Activated CD4-positive, alpha-beta memory T cell treated with anti-CD3 and anti-CD28 coated beads, Interleukin-2, amount 10 ng/mL, durations not matched to agents 7 days and 5 days (primary cell): ENCODE measurements at regions of chr6 and their contacts with region 1.

Region 1: GRCh38 chr6:24910961-24911712 is 24.6 kb downstream of the RIPOR2 start:
- DNase-seq: peak; percentile 46
- H3K4me3 Mint-ChIP-seq: peak overlapping the region; percentile 76
- H3K27ac Mint-ChIP-seq: peak overlapping the region; percentile 79
- H3K4me1 Mint-ChIP-seq: peaks cover 90% of the 10 kb centered on the region
- H3K27me3 Mint-ChIP-seq: no peaks in the 10 kb centered on the region

Region 2: GRCh38 chr6:24827162-24827561 is 84.0 kb before region 1 on chr6:
- CTCF ChIA-PET with region 1: no interaction called
- POLR2A ChIA-PET with region 1: no interaction called
- DNase-seq: no peak
- H3K4me3 Mint-ChIP-seq: no peak overlapping the region
- H3K27ac Mint-ChIP-seq: peak overlapping the region; percentile 36
- H3K4me1 Mint-ChIP-seq: no peaks in the 10 kb centered on the region
- H3K27me3 Mint-ChIP-seq: no peaks in the 10 kb centered on the region

Region 3: DNA sequence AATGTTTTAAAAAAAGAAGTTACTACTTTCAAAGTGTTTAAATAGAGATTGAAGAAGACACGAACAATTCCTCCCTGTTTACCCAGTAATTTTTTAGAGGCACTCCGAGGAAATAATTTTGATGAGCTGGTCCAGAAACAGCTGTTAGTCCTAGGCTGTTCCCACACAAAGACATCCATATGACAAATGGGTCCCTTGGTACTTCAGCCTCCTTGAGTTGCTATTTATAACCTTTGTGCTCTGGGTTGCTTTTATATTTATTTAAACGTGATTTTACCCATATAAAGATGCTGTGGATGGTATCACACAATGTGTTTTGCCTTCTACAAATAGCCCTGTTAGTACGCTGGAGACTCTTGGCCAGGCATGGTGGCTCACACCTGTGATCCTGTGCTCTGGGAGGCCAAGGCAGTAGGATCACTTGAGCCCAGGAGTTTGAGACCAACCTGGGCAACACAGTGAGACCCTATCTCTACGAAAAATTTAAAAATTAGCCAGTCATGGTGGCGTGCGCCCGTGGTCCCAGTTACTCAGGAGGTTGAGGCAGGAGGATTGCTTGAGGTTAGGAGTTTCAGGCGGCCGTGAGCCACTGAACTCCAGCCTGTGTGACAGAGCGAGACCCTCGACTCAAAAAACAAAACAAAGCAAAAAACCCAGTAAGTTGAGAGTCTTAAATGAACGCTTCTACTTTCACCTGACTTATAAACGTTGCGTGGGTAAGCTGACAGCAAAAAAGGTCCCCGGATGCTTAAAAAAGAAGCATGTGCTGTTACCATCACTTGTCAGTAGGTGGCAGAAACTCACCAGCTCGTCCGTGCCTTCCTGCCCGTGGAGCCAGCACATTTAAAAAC is 55.5 kb before region 1 on chr6:
- CTCF ChIA-PET with region 1: interaction called, 32 read pairs
- POLR2A ChIA-PET with region 1: interaction called, 33 read pairs
- DNase-seq: peak; percentile 75
- H3K4me3 Mint-ChIP-seq: no peak overlapping the region
- H3K27ac Mint-ChIP-seq: peak overlapping the region; percentile 90
- H3K4me1 Mint-ChIP-seq: peaks cover 55% of the 10 kb centered on the region
- H3K27me3 Mint-ChIP-seq: no peaks in the 10 kb centered on the region

Region 4: DNA sequence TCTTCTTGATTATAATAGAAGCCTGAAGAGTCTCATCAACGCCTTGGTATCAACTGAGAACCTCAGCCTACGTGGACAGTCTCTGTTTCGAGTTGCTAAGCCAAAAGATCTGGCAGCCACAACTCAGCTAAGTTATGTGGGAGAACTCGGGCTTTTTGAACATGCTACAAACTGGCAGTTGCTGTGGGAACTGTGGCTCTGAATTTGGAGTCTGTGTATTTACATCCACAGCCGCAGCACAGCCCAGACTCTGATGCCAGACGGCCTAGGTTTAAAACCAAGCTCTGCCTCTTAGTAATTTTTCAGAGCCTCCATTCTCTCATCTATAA is 11.2 kb before region 1 on chr6:
- CTCF ChIA-PET with region 1: interaction called, 7 read pairs
- POLR2A ChIA-PET with region 1: interaction called, 35 read pairs
- DNase-seq: peak; percentile 21
- H3K4me3 Mint-ChIP-seq: no peak overlapping the region
- H3K27ac Mint-ChIP-seq: peak overlapping the region; percentile 62
- H3K4me1 Mint-ChIP-seq: peaks cover 66% of the 10 kb centered on the region
- H3K27me3 Mint-ChIP-seq: no peaks in the 10 kb centered on the region

Region 5: GRCh38 chr6:24924580-24925356 is 13.6 kb after region 1 on chr6:
- CTCF ChIA-PET with region 1: interaction called, 12 read pairs
- POLR2A ChIA-PET with region 1: interaction called, 54 read pairs
- DNase-seq: no peak
- H3K4me3 Mint-ChIP-seq: peak overlapping the region; percentile 26
- H3K27ac Mint-ChIP-seq: peak overlapping the region; percentile 57
- H3K4me1 Mint-ChIP-seq: peaks cover 87% of the 10 kb centered on the region
- H3K27me3 Mint-ChIP-seq: peaks cover 3% of the 10 kb centered on the region

Region 6: GRCh38 chr6:24974182-24975171 is 63.3 kb after region 1 on chr6:
- CTCF ChIA-PET with region 1: interaction called, 3 read pairs
- POLR2A ChIA-PET with region 1: interaction called, 10 read pairs
- DNase-seq: peak; percentile 64
- H3K4me3 Mint-ChIP-seq: peak overlapping the region; percentile 32
- H3K27ac Mint-ChIP-seq: peak overlapping the region; percentile 85
- H3K4me1 Mint-ChIP-seq: peaks cover 37% of the 10 kb centered on the region
- H3K27me3 Mint-ChIP-seq: no peaks in the 10 kb centered on the region

Region 7: DNA sequence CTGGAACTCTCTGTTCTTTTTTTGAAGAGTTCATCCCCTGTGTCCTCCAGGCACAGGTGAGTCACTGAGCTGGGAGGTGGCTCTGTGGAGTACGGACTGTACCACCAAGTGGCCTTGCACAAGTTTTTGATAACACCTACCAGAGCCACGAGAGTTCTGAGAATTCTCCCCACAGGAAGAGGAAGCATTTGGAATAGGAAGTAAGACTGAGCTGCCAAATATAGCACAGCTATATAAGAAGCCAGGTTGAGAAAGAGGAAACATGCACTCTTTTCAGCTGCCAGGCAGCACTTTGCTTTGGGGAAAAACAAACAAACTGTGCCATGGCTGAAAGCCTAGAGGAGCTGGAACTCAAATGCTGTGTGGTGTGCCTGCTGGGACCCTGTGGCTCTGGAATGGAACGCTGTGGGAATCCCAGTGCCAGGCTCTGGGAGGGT is 95.4 kb after region 1 on chr6:
- CTCF ChIA-PET with region 1: no interaction called
- POLR2A ChIA-PET with region 1: interaction called, 22 read pairs
- DNase-seq: peak; percentile 75
- H3K4me3 Mint-ChIP-seq: peak overlapping the region; percentile 50
- H3K27ac Mint-ChIP-seq: peak overlapping the region; percentile 92
- H3K4me1 Mint-ChIP-seq: peaks cover 79% of the 10 kb centered on the region
- H3K27me3 Mint-ChIP-seq: no peaks in the 10 kb centered on the region